ENCODE measurements at regions of chr16 and their contacts with region 1.

Region 1: GRCh38 chr16:47141773-47142485 is 1.8 kb downstream of the NETO2 start:
- DNase-seq: peak; percentile 75 to 87 (median 81)
- ATAC-seq: peak; percentile 86 to 95 (median 90)
- H3K4me3 ChIP-seq: peak overlapping the region in 11 of 12 donors; percentile 44 to 74 (median 61)
- H3K27ac ChIP-seq: peak overlapping the region in 2 of 12 donors; percentile 60 to 67
- H3K4me1 ChIP-seq: peaks cover 0 to 27% (median 3%) of the 10 kb centered on the region in 12 donors
- H3K27me3 ChIP-seq: peaks cover 0 to 4% (median 0%) of the 10 kb centered on the region in 9 donors
- CTCF ChIP-seq: peak; percentile 80 to 96 (median 90)
- POLR2A ChIP-seq: no peak

Region 2: GRCh38 chr16:46822270-46822669 is 319.7 kb before region 1 on chr16:
- intact Hi-C with region 1: no loop called
- DNase-seq: no peak
- ATAC-seq: no peak
- H3K4me3 ChIP-seq: no peak overlapping the region
- H3K27ac ChIP-seq: no peak overlapping the region
- H3K4me1 ChIP-seq: peaks cover 0 to 14% (median 0%) of the 10 kb centered on the region in 12 donors
- H3K27me3 ChIP-seq: no peaks in the 10 kb centered on the region
- CTCF ChIP-seq: no peak
- POLR2A ChIP-seq: no peak

Region 3: DNA sequence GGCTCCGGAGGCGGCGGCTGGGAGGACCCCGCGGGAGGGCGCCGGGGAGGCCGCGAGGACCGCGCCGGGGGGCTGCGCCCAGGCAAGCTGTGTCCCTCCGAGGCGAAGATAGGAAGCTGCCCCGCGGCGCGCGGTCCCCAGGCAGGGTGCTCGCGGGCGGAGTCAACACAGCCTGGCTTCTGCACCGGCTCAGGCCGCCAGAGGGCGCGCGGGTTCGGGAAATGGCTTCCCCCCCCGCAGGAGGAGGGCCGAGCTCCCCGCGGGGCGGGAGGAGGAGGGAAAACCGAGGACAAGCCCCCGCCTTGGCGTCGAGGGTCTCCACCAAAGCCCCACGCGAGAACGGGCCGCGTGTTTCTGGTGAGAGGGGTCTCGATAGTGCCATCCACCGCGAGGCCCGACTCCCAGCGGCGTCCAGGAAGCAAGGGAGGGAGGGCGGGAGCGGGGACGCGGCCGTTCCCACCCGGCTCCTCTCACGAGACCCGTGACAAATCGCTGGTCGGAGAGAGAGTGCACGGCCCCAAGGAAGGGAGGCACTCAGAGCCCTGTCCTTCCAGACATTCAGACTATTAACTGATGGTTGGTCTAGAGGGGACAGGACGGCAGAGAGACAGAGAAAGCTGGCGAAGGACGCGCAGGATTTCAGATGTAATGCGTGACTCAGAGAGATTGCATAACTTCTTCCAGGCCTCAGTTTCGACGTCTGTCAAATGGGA is 104.0 kb before region 1 on chr16:
- intact Hi-C with region 1: loop called in 7 of 10 experiments (anchors 5 kb)
- DNase-seq: peak; percentile 89 to 95 (median 90)
- ATAC-seq: peak; percentile 85 to 99 (median 98)
- H3K4me3 ChIP-seq: peak overlapping the region; percentile 60 to 78 (median 66)
- H3K27ac ChIP-seq: peak overlapping the region in 6 of 12 donors; percentile 29 to 68 (median 50)
- H3K4me1 ChIP-seq: peaks cover 0 to 12% (median 3%) of the 10 kb centered on the region in 12 donors
- H3K27me3 ChIP-seq: no peaks in the 10 kb centered on the region
- CTCF ChIP-seq: peak; percentile 87 to 98 (median 94)
- POLR2A ChIP-seq: no peak

Region 4: DNA sequence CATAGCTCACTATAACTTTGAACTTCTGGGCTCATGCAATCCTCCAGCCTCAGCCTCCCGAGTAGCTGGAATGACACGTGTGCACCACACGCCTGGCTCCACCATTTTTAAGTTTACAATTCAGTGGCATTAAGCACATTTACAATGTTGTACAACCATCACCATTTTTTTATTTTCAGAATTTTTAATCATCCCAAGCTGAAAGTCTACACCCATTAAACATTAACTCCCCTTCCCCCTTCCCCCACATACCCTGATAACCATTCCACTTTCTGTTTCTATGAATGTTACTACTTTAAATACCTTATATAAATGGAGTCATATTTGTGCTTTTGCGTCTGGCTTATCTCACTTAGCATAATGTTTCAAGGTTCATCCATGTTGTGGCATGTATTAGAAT is 16.2 kb before region 1 on chr16:
- intact Hi-C with region 1: no loop called
- DNase-seq: no peak
- ATAC-seq: no peak
- H3K4me3 ChIP-seq: no peak overlapping the region
- H3K27ac ChIP-seq: no peak overlapping the region
- H3K4me1 ChIP-seq: peaks cover 0 to 3% (median 0%) of the 10 kb centered on the region in 12 donors
- H3K27me3 ChIP-seq: no peaks in the 10 kb centered on the region
- CTCF ChIP-seq: no peak
- POLR2A ChIP-seq: no peak

Region 5: DNA sequence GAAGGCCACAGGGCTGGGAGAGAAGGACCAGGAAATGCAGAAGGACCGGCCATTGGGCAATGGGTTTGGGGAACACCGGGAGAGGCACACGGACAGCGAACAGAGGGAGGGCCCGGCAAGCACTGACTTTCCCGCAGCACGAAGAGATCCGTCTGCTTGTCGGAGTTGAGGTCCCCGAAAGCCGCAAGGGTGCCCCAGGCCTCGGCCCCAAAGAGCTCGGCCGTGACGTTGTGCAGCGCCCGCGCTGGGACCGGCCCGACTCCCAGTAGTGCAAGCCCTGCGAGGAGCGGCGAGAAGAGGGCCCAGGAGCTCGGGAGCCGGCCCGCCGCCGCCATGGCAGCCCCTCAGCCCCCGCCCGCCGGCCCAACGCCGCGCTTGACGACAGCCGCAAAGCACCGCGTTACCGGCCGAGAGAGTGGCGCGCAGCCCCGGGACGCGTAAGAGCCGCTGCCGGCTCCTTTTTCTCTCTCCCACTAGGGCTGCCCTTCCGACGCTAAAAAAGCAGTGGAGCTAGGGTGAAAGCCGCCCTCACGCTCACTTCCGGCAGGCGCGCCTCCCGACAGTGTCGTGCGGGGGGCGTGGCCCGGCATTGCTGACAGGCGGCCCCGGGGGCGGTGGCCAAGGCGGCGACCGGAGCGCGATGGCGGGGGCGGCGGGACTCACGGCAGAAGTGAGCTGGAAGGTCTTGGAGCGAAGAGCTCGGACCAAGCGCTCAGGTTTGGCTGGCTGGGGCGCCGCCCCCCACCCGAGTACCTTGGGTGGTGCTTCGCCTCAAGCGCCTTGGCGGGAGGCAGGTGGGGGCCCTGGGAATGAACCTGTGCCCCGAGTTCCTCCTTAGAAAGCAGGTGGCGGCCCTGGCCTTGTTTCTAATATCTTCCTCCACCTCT is 319.0 kb after region 1 on chr16 and contains the starts of genes ITFG1 and PHKB:
- intact Hi-C with region 1: loop called in 1 of 10 experiments (anchors 10 kb)
- DNase-seq: peak; percentile 94 to 96 (median 95)
- ATAC-seq: peak; percentile 90 to 97 (median 96)
- H3K4me3 ChIP-seq: peak within 1 kb of the TSS; percentile 78 to 96 (median 90)
- H3K27ac ChIP-seq: peak within 1 kb of the TSS; percentile 94 to 100 (median 99)
- H3K4me1 ChIP-seq: peaks cover 13 to 59% (median 50%) of the 10 kb centered on the region in 12 donors
- H3K27me3 ChIP-seq: no peaks in the 10 kb centered on the region
- CTCF ChIP-seq: peak in 7 of 12 donors; percentile 6 to 26 (median 18)
- POLR2A ChIP-seq: peak in 1 of 2 donors; percentile 83
- total RNA-seq, gene ITFG1: 45.2 to 102 (median 73.4) TPM
- total RNA-seq, gene PHKB: 49.2 to 70.1 (median 61.9) TPM

Region 6: GRCh38 chr16:48054881-48055601 is 913.1 kb after region 1 on chr16:
- intact Hi-C with region 1: loop called in 8 of 10 experiments (anchors 5 to 10 kb)
- DNase-seq: peak in 4 of 5 donors; percentile 28 to 40 (median 34)
- ATAC-seq: peak in 3 of 4 donors; percentile 64 to 85 (median 68)
- H3K4me3 ChIP-seq: peak overlapping the region in 3 of 12 donors; percentile 9 to 23 (median 15)
- H3K27ac ChIP-seq: no peak overlapping the region
- H3K4me1 ChIP-seq: peaks cover 0 to 23% (median 4%) of the 10 kb centered on the region in 12 donors
- H3K27me3 ChIP-seq: peaks cover 0 to 3% (median 0%) of the 10 kb centered on the region in 9 donors
- CTCF ChIP-seq: peak; percentile 65 to 82 (median 78)
- POLR2A ChIP-seq: no peak

Region 7: GRCh38 chr16:48156790-48157209 is 1014.9 kb after region 1 on chr16:
- intact Hi-C with region 1: loop called (anchors 1 to 5 kb)
- DNase-seq: peak; percentile 84 to 90 (median 86)
- ATAC-seq: peak; percentile 79 to 94 (median 84)
- H3K4me3 ChIP-seq: peak overlapping the region in 4 of 12 donors; percentile 10 to 30 (median 24)
- H3K27ac ChIP-seq: peak overlapping the region in 6 of 12 donors; percentile 45 to 64 (median 49)
- H3K4me1 ChIP-seq: peaks cover 0 to 17% (median 6%) of the 10 kb centered on the region in 12 donors
- H3K27me3 ChIP-seq: peaks cover 0 to 3% (median 0%) of the 10 kb centered on the region in 9 donors
- CTCF ChIP-seq: peak; percentile 94 to 99 (median 96)
- POLR2A ChIP-seq: no peak

Region 8: DNA sequence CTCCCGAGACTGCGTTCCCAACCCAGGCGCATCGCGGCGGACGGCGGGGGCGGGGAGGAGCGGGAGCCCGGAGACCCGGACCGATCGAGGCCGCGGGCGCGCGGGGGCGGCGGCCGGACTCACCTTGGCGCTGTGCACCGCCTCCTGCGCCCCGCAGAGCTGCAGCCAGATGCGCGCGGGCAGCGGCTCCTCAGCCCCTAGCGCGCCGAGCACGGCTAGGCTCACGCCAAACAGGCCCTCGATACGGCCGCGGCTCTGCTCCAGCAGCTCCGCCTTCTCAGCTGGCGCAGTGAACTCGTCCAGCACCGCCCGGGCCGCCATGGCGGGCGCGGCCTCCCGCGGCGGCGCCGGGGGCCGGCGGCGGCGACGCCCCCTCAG is 1467.7 kb after region 1 on chr16:
- intact Hi-C with region 1: loop called in 1 of 10 experiments (anchors 10 kb)
- DNase-seq: peak; percentile 66 to 87 (median 74)
- ATAC-seq: peak in 3 of 4 donors; percentile 46 to 77 (median 76)
- H3K4me3 ChIP-seq: peak overlapping the region; percentile 72 to 99 (median 90)
- H3K27ac ChIP-seq: peak overlapping the region; percentile 62 to 97 (median 90)
- H3K4me1 ChIP-seq: peaks cover 3 to 81% (median 45%) of the 10 kb centered on the region in 12 donors
- H3K27me3 ChIP-seq: no peaks in the 10 kb centered on the region
- CTCF ChIP-seq: no peak
- POLR2A ChIP-seq: no peak

Measured in heart left ventricle (tissue), 16 donors.